ENCODE measurements at regions of chr17 and their contacts with region 1.

Region 1: GRCh38 chr17:72725433-72726068 is 366.9 kb downstream of the SLC39A11 start:
- DNase-seq: peak; percentile 41 to 71 (median 58)
- ATAC-seq: peak; percentile 55 to 77
- H3K4me3 ChIP-seq: no peak overlapping the region
- H3K27ac ChIP-seq: no peak overlapping the region
- H3K4me1 ChIP-seq: no peaks in the 10 kb centered on the region
- H3K27me3 ChIP-seq: no peaks in the 10 kb centered on the region

Region 2: DNA sequence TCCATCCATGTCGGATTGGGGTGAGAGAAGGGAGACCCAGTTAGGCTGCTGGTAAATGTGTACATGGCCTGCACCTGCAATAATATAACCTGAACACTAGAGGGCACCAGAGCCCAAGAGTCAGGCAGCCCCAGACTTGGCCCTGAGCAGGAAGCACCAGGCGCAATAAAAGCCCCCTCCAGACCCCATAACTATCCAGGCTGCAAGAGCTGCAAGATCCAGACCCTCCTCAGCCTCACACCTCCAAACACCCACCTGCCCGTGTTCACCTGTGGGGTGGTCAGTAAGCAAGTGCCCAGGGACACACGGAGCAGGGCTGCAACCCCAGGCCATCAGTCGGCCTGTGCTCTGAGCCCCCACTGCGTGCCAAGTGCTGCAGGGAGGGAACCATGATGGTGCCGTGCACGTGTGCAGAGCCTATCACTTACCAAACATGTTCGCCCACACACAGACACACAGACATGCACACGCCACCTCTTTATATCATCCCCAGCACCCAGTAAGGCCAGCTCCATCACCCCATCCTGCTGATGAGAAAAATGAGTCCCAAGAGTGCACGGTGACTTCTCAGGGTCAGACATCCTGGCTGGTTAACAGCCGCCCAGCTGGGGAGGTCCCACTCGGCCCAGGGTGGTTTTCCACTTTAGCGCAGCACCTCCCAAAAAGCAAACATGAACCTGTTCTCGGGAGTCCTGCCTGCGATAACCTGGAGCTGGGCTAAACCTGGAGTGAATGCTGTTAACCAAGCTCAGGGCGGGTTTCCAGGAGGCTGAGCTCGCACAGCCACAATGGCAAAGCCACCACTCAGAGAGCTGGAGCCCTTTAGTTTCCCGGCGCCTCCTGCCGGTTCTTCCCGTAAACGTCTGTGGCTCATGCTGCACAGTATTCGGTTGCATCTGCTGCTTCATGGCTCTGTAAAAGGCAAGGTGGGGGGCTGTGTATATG is 165.0 kb before region 1 on chr17:
- intact Hi-C with region 1: loop called in 1 of 4 experiments (anchors 10 kb)
- DNase-seq: no peak
- ATAC-seq: peak; percentile 67 to 75
- H3K4me3 ChIP-seq: no peak overlapping the region
- H3K27ac ChIP-seq: no peak overlapping the region
- H3K4me1 ChIP-seq: no peaks in the 10 kb centered on the region
- H3K27me3 ChIP-seq: no peaks in the 10 kb centered on the region

Region 3: GRCh38 chr17:72622661-72623433 is 102.7 kb before region 1 on chr17:
- intact Hi-C with region 1: no loop called
- DNase-seq: no peak
- ATAC-seq: no peak
- H3K4me3 ChIP-seq: no peak overlapping the region
- H3K27ac ChIP-seq: no peak overlapping the region
- H3K4me1 ChIP-seq: no peaks in the 10 kb centered on the region
- H3K27me3 ChIP-seq: no peaks in the 10 kb centered on the region

Region 4: DNA sequence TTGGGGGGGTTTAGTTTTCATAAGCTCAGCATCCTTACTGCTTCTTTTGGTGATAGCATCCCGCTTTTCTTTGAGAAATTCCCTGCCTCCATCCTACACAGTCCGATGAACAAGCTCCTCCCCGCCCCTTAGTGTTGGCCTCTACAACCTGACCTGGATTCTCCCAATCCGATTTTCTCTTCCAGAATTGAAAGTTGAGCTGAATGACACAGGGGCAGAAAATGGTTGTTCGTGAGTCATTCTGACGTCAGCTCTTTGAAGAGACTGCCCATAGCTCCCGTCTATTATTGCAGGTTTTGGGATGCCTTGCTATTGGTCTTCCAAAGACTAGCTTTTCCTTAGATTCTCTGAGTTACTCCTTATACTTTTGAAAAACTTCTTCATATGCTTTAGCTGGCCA is 87.3 kb after region 1 on chr17:
- intact Hi-C with region 1: no loop called
- DNase-seq: no peak
- ATAC-seq: no peak
- H3K4me3 ChIP-seq: no peak overlapping the region
- H3K27ac ChIP-seq: no peak overlapping the region
- H3K4me1 ChIP-seq: no peaks in the 10 kb centered on the region
- H3K27me3 ChIP-seq: no peaks in the 10 kb centered on the region

Region 5: DNA sequence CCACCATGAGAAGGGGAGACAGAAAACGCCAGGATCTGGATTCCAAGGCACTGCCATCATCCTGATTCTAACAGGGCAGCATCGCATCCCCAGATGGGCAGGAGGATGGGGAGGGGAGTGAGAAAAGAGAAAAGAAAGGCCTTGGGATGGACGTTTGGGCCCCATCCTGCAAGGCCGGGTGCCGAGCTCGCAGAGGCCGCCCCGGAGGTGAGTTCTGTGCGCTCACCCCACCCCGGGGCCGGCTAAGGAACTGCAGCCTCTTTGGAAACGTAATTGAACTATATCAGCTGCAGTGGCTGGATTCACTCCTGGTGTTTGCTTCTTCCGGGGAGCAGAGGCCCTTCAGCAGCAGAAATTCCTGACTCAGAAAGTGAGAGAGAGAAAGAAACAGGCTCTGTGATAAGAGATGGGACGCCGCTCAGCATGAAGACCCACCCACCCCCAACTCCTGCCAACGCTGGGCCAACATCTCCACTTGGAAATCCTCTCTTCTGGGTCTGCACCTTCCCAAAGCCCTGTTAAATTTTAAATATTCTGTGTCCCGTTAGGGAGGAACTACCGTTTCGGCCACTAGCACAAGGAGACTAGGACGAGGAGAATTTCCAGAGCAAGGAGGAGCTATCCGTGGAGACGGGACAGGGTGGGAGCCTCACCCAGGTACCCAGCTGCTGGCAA is 430.8 kb after region 1 on chr17:
- intact Hi-C with region 1: loop called (anchors 5 to 10 kb)
- DNase-seq: peak; percentile 72 to 91 (median 86)
- ATAC-seq: peak; percentile 90 to 93
- H3K4me3 ChIP-seq: no peak overlapping the region
- H3K27ac ChIP-seq: no peak overlapping the region
- H3K4me1 ChIP-seq: no peaks in the 10 kb centered on the region
- H3K27me3 ChIP-seq: no peaks in the 10 kb centered on the region

Region 6: DNA sequence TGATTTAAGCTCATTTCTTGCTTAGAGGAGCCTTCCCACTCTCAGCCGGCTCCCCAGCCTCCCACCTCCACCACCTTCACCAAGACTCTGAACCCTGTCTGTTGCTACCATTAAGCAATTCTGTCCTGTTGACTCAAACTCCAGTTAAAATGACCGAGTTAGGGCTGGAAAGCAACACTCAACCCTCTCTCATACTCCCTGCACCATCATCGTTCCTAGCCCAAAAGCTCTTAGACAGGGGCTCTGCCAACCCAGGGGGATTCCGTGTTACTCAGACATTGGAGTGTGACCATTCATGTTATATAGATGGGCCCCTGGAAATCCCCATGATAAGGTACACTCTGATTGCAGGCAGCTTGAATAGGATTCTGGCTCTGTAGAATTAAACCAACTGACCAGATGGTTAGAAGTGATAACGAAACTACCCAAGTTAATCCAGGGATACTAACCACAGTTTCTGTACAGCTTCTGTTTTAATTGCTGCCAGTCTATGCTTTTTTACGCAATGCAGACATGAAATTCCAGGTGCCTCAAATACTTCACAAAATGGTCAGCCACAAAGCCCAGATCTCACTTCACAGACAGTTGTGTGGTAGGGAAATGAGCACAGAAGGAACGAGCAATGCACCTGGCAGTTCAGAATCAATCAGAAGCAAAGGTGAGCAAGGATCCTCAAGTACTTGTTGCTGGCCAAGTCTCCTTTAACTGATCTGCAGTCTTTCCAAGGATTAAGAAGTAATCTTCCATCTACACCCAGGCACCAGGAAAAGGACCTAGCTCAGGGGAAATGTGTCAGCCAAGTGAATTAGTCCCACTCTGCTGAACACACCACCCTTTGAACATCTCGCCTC is 441.4 kb after region 1 on chr17:
- intact Hi-C with region 1: loop called in 1 of 4 experiments (anchors 10 kb)
- DNase-seq: no peak
- ATAC-seq: no peak
- H3K4me3 ChIP-seq: peak overlapping the region; percentile 26
- H3K27ac ChIP-seq: no peak overlapping the region
- H3K4me1 ChIP-seq: peaks cover 3% of the 10 kb centered on the region
- H3K27me3 ChIP-seq: no peaks in the 10 kb centered on the region

Measured in right cardiac atrium (tissue), 5 donors.